ENCODE measurements at regions of chr14 and their contacts with region 1.

Region 1: GRCh38 chr14:37116933-37117849 is 55.2 kb downstream of the SLC25A21 start:
- H3K4me3 ChIP-seq: peak overlapping the region; percentile 15; the same call in 1 of the 2 replicates
- H3K27ac ChIP-seq: peak overlapping the region; percentile 89
- H3K4me1 ChIP-seq: peaks cover 26% of the 10 kb centered on the region
- CTCF ChIP-seq: peak; percentile 72; the same call in 1 of the 2 replicates

Region 2: DNA sequence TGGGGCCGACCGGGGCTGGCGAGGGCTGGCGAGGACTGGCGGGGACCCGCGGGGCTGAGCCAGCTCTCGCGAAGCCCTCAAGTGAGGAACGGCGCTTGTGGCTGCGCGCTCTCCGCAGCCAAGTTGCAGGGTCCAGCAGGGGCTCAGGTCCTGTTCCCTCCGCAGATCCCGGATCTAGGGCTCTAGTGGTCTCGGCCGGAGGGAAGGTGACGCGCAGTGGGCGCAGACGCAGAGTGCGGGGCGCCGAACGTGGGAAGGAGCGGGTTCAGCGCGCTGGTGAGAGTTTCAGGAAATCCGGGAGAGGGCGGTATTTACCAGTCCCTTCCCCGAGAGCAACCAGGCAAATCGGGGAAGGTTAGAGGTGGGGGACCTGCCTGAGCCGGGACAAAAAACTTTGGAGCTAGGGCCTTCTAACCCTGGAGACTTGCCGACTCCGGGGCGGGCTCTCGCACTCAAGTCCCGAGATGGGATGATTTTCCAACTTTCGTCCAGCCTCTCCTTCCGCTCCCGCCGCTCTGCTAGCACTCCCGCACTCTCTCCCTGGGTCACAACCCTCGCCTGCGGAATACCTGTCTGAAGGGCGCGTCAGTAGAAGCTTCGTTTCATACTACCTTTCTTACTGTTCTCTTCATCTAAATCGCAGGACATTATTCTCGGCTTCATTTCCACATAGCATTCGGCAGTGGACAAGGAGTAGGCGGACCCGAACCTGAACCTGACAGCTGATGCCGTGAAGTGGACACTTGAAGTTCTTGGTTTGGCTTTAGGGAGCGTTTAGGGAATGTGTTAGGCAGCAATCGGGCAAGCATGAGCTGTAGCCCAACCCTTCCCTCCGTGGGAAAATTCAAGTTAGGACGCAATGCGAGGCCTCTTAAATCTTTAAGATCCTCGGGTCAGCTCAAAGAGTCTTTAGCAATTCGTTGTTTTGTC is 469.1 kb before region 1 on chr14:
- CTCF ChIA-PET with region 1: interaction called, 30 read pairs
- POLR2A ChIA-PET with region 1: interaction called, 3 read pairs
- H3K4me3 ChIP-seq: peak overlapping the region; percentile 47
- H3K27ac ChIP-seq: peak overlapping the region; percentile 70; the same call in 1 of the 2 replicates
- H3K4me1 ChIP-seq: peaks cover 15% of the 10 kb centered on the region
- CTCF ChIP-seq: no peak

Region 3: GRCh38 chr14:36773136-36773540 is 344.1 kb before region 1 on chr14:
- CTCF ChIA-PET with region 1: interaction called, 11 read pairs
- POLR2A ChIA-PET with region 1: no interaction called
- H3K4me3 ChIP-seq: no peak overlapping the region
- H3K27ac ChIP-seq: no peak overlapping the region
- H3K4me1 ChIP-seq: peaks cover 35% of the 10 kb centered on the region
- CTCF ChIP-seq: peak; percentile 42; the same call in 1 of the 2 replicates

Measured in HEK293 (cell line).